ENCODE measurements at regions of chr21 and their contacts with region 1.

Region 1: DNA sequence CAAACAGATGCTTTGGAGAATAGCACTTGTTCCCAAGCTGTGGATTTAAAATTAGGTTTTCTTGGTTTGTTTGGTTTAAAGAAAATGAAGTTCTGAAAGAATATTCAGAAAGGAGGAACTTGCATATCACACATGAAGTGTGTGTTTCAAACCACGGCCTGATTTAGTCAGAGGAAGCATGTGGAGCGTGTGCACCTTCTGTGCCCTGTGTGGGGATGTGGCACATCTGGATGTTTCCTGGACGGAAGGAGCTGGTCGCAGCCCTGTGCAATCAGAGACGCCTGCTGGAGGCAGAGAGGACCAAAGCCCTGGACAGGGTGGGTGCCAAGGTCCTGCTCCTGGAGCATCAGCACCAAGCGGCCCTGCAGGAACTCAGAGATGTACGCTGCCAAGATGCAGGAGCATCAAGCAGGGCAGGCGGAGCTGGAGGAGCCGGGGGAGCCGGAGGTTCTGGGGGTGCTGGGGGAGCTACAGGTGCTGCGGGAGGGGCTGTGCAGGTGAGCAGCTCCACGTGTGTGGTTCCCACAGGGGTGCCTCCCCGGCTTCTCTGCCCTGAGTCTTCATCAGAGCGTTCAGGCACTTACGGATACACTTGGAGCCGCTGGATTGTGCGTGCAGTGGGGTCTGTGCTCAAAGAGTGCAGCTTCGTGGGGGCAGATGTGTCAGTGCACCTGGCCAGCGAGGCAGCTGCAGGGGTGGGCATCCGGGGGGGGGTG is 45.7 kb downstream of the PCNT start:
- DNase-seq: no peak
- ATAC-seq: no peak
- H3K4me3 ChIP-seq: no peak overlapping the region
- H3K4me3 Mint-ChIP-seq: peak overlapping the region in 5 of 10 donors; percentile 40 to 80 (median 59)
- H3K27ac ChIP-seq: peak overlapping the region; percentile 58
- H3K27ac Mint-ChIP-seq: peak overlapping the region in 8 of 9 donors; percentile 80 to 96 (median 90)
- H3K4me1 ChIP-seq: peaks cover 7 to 21% of the 10 kb centered on the region in 2 donors
- H3K4me1 Mint-ChIP-seq: peaks cover 14 to 28% (median 20%) of the 10 kb centered on the region in 7 donors
- H3K27me3 ChIP-seq: no peaks in the 10 kb centered on the region
- H3K27me3 Mint-ChIP-seq: no peaks in the 10 kb centered on the region

Region 2: GRCh38 chr21:46334351-46335140 is 35.1 kb before region 1 on chr21:
- CTCF ChIA-PET with region 1: no interaction called
- POLR2A ChIA-PET with region 1: no interaction called
- intact Hi-C with region 1: no loop called
- DNase-seq: no peak
- ATAC-seq: no peak
- H3K4me3 ChIP-seq: no peak overlapping the region
- H3K4me3 Mint-ChIP-seq: no peak overlapping the region
- H3K27ac ChIP-seq: no peak overlapping the region
- H3K27ac Mint-ChIP-seq: no peak overlapping the region
- H3K4me1 ChIP-seq: no peaks in the 10 kb centered on the region
- H3K4me1 Mint-ChIP-seq: peaks cover 0 to 9% (median 4%) of the 10 kb centered on the region in 7 donors
- H3K27me3 ChIP-seq: no peaks in the 10 kb centered on the region
- H3K27me3 Mint-ChIP-seq: no peaks in the 10 kb centered on the region

Region 3: GRCh38 chr21:46424039-46424591 is 54.4 kb after region 1 on chr21:
- CTCF ChIA-PET with region 1: no interaction called
- POLR2A ChIA-PET with region 1: no interaction called
- intact Hi-C with region 1: loop called in 1 of 2 experiments (anchors 10 kb)
- DNase-seq: peak in 6 of 9 donors; percentile 24 to 48 (median 34)
- ATAC-seq: peak; percentile 45
- H3K4me3 ChIP-seq: peak overlapping the region; percentile 20
- H3K4me3 Mint-ChIP-seq: peak overlapping the region in 9 of 10 donors; percentile 59 to 82 (median 72)
- H3K27ac ChIP-seq: peak overlapping the region; percentile 78
- H3K27ac Mint-ChIP-seq: peak overlapping the region; percentile 65 to 98 (median 91)
- H3K4me1 ChIP-seq: peaks cover 8 to 34% of the 10 kb centered on the region in 2 donors
- H3K4me1 Mint-ChIP-seq: peaks cover 5 to 40% (median 16%) of the 10 kb centered on the region in 7 donors
- H3K27me3 ChIP-seq: no peaks in the 10 kb centered on the region
- H3K27me3 Mint-ChIP-seq: no peaks in the 10 kb centered on the region

Measured in naive thymus-derived CD4-positive, alpha-beta T cell (primary cell).